ENCODE measurements at regions of chr6 and their contacts with region 1.

Region 1: DNA sequence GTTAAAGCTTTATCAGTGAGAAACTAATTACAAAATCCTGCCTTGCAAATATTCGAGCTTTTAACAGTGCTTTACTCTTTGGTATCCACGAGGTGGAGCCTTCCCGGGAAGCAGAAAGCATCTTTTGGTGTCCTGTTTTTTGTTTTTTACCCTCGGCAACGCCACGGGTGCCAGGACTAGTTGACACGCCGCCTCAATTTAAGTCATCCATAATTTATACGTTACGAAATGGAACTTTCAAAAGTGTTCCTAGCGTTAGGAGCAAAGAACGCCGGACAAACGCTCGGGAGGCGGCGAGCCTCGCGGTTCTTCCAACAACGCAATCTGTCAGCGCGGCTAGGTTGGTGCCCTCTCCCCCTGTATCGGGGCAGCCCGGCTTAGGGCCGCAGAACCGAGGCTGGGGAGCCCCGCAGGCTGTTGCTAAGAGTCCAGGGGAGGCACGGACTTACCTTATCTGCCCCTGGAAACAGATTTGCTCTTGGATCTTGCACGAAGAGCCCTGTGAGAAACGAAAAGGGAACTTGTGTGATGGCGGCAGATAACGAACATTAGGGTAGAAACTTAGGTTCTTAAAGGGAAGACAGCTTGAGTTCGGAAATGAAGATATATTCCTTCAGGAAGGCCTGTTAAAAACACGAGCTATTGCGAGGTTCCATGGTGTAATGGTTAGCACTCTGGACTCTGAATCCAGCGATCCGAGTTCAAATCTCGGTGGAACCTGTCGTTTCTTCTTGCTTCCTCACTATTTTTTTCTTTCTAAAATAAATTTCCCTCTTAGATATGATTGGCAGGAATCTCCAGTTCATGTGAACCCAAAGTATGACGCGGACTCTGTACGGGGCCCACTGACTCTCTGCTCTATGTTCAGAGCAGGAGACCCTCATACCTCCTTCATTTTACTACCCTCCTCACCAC is 46.2 kb upstream of the ZNF184 start:
- DNase-seq: peak; percentile 33
- H3K4me3 ChIP-seq: peak overlapping the region; percentile 69
- H3K27ac ChIP-seq: peak overlapping the region; percentile 77
- H3K4me1 ChIP-seq: peaks cover 13% of the 10 kb centered on the region
- H3K27me3 ChIP-seq: peaks cover 30% of the 10 kb centered on the region
- CTCF ChIP-seq: peak; percentile 77

Region 2: DNA sequence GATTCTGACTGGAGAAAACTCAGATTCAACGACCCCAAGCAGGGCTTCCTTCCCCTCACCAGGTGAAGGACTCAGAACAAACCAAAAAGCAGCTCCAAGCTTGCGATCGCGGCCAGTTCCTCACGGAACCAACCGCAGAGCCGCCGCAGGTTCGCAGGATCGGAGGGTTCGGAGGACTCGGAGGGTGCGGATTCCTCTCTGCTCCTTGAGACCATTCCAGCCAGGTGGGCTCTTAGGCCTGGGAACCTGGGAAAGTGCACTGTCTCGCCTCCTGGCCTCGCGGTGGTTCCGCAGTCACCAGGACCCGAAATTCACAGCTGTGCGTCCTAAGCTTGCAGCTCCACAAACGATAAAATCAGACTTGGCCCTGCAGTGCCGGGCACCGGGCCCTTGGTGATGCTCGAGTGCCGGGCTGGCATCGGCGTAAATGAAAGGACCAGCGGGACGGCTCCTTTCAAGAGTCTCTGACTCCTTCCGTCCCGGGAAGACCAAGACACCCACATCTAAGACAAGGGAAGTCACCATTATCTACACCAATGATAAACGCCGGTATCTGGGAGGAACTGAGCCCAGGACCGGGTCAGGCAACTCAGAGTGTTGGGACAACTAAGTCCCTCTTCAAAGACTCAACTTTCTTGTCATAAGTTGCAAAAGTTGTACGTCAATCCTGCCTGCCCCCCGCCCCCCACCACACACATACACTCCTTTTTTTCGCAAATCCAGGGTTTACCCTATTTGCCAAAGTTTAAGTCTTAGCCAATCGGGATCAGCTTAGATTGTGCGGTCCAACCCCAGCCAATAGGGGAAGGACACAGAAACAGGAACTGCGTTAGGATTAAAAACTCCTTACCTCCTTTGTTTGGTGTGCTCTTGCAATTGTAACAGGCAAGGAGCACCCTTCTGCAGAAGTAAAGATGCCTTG is 341.4 kb before region 1 on chr6:
- intact Hi-C with region 1: loop called (anchors 10 kb)
- DNase-seq: peak; percentile 64
- H3K4me3 ChIP-seq: peak overlapping the region; percentile 79
- H3K27ac ChIP-seq: peak overlapping the region; percentile 64
- H3K4me1 ChIP-seq: peaks cover 23% of the 10 kb centered on the region
- H3K27me3 ChIP-seq: peaks cover 40% of the 10 kb centered on the region
- CTCF ChIP-seq: peak; percentile 43

Region 3: DNA sequence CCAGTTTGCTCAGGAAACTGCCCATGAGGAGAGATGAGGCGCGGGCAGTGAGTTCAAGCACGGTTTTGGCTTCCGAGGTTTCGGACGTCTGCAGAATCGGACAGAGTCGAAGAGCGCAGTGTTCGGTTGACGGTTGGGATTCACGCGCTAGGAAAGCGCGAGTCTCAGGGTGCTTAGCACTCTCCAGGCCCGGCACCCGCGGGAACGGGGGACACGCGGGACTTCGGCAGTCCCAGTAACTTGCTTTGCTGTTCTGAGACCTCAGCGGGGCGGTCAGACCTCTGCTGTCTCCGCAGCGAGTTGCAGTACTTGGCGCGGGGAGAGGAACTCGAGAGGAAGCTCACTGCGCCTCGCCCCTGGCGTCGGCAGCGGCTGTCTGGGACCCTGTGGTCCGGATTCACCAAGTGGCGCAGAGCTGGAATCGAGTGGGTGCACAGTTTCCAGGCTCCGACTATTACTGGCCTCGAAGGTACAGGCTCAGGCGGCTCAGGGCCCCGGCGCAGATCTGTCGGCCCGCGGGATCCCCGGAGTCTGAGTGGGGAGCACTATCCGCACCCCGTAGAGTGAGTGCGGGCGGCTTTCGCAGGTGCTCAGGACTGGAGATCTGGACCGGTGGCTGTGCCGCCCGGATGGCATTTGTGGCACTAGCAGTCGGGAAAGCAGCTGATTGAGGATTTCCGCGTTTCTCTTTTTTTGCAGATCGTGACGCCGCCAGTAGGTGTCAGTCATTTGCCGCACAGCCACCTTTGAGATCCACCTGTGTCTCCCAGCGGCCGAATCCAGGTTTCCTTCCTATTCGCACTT is 206.8 kb before region 1 on chr6 and contains the start of gene POM121L2:
- intact Hi-C with region 1: no loop called
- DNase-seq: no peak
- H3K4me3 ChIP-seq: peak within 1 kb of the TSS; percentile 65
- H3K27ac ChIP-seq: no peak within 1 kb of the TSS
- H3K4me1 ChIP-seq: peaks cover 12% of the 10 kb centered on the region
- H3K27me3 ChIP-seq: peaks cover 86% of the 10 kb centered on the region
- CTCF ChIP-seq: peak; percentile 58
- total RNA-seq, gene POM121L2: not detected

Region 4: GRCh38 chr6:27374824-27375612 is 144.1 kb before region 1 on chr6:
- intact Hi-C with region 1: no loop called
- DNase-seq: peak; percentile 79
- H3K4me3 ChIP-seq: peak overlapping the region; percentile 76
- H3K27ac ChIP-seq: peak overlapping the region; percentile 47
- H3K4me1 ChIP-seq: peaks cover 23% of the 10 kb centered on the region
- H3K27me3 ChIP-seq: no peaks in the 10 kb centered on the region
- CTCF ChIP-seq: no peak

Region 5: DNA sequence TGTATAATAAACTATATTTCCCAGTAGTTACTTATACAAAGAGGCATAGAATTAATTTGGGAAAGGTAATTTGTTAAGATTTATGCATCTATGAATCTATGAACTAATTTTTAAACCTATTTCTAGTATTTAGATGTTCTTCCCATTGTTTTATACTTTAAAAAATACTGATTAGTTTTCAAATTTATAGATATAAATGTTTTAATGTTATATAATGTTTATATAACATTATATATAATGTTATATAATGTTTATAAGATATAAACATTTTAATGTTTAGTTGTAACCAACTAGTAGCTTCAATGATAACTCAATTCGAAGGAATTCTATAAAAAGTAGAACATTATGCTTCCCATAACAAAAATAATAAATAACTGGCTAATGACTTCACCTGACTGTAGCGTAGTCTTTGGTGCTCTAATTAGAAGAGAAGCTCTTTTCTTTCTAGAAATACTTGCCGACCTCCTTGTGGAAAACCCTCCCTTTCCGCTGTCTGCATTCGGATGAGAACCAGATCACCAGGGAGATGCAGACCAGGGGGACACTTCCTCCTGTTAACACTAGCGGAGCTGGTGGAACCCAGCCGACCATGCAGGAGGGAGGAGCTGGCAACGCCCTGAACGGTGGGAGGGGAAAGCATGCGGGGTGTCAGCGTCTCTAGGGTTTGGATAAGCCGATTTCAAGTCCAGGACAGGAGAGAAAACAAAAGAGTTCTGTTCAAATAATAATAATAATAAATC is 234.7 kb after region 1 on chr6:
- intact Hi-C with region 1: loop called (anchors 10 kb)
- DNase-seq: peak; percentile 53
- H3K4me3 ChIP-seq: peak overlapping the region; percentile 83
- H3K27ac ChIP-seq: no peak overlapping the region
- H3K4me1 ChIP-seq: peaks cover 22% of the 10 kb centered on the region
- H3K27me3 ChIP-seq: peaks cover 37% of the 10 kb centered on the region
- CTCF ChIP-seq: peak; percentile 19

Measured in left ventricle myocardium inferior (tissue), 1 donor.